ENCODE measurements at regions of chr15 and their contacts with region 1.

Region 1: GRCh38 chr15:62060113-62060895 is at the start of gene VPS13C:
- DNase-seq: peak; percentile 93
- ATAC-seq: peak; percentile 94
- H3K4me3 Mint-ChIP-seq: peak within 1 kb of the TSS; percentile 81
- H3K27ac Mint-ChIP-seq: peak within 1 kb of the TSS; percentile 94
- H3K4me1 Mint-ChIP-seq: peaks cover 35% of the 10 kb centered on the region
- H3K27me3 Mint-ChIP-seq: peaks cover 18% of the 10 kb centered on the region
- total RNA-seq, gene VPS13C: 58.3 to 64.7 TPM

Region 2: GRCh38 chr15:62071711-62072308 is 11.5 kb after region 1 on chr15:
- CTCF ChIA-PET with region 1: interaction called, 13 read pairs
- POLR2A ChIA-PET with region 1: interaction called, 5 read pairs
- DNase-seq: no peak
- ATAC-seq: no peak
- H3K4me3 Mint-ChIP-seq: no peak overlapping the region
- H3K27ac Mint-ChIP-seq: no peak overlapping the region
- H3K4me1 Mint-ChIP-seq: peaks cover 12% of the 10 kb centered on the region
- H3K27me3 Mint-ChIP-seq: peaks cover 27% of the 10 kb centered on the region

Region 3: GRCh38 chr15:62099094-62099601 is 38.8 kb after region 1 on chr15:
- CTCF ChIA-PET with region 1: no interaction called
- POLR2A ChIA-PET with region 1: no interaction called
- DNase-seq: no peak
- ATAC-seq: no peak
- H3K4me3 Mint-ChIP-seq: no peak overlapping the region
- H3K27ac Mint-ChIP-seq: no peak overlapping the region
- H3K4me1 Mint-ChIP-seq: no peaks in the 10 kb centered on the region
- H3K27me3 Mint-ChIP-seq: peaks cover 5% of the 10 kb centered on the region

Region 4: DNA sequence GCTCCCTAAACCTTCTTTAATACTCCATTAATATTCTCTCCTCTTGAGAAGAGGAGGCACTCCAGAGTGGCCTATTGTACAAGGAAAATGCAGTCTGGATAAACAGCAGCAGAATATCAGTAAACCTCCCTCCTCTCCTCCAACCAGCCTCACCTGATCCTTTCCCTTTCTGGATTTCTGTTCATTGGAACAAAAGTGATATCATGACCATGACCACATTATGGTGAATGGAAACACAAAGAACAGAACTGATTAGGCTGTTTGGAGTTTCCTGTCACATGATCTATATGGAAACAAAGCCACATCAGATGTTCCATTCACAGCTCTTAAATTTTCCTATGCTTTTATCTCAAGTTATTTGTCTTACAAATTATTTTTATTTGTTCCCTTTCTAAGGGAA is 90.1 kb after region 1 on chr15:
- CTCF ChIA-PET with region 1: no interaction called
- POLR2A ChIA-PET with region 1: no interaction called
- DNase-seq: no peak
- ATAC-seq: no peak
- H3K4me3 Mint-ChIP-seq: no peak overlapping the region
- H3K27ac Mint-ChIP-seq: no peak overlapping the region
- H3K4me1 Mint-ChIP-seq: no peaks in the 10 kb centered on the region
- H3K27me3 Mint-ChIP-seq: peaks cover 12% of the 10 kb centered on the region

Measured in activated CD8-positive, alpha-beta T cell treated with anti-CD3 and anti-CD28 coated beads, Interleukin-2, amount 10 ng/mL, durations not matched to agents 7 days and 5 days (primary cell).